Breast epithelium (tissue), 4 donors: ENCODE measurements at regions of chr17 and their contacts with region 1.

Region 1: DNA sequence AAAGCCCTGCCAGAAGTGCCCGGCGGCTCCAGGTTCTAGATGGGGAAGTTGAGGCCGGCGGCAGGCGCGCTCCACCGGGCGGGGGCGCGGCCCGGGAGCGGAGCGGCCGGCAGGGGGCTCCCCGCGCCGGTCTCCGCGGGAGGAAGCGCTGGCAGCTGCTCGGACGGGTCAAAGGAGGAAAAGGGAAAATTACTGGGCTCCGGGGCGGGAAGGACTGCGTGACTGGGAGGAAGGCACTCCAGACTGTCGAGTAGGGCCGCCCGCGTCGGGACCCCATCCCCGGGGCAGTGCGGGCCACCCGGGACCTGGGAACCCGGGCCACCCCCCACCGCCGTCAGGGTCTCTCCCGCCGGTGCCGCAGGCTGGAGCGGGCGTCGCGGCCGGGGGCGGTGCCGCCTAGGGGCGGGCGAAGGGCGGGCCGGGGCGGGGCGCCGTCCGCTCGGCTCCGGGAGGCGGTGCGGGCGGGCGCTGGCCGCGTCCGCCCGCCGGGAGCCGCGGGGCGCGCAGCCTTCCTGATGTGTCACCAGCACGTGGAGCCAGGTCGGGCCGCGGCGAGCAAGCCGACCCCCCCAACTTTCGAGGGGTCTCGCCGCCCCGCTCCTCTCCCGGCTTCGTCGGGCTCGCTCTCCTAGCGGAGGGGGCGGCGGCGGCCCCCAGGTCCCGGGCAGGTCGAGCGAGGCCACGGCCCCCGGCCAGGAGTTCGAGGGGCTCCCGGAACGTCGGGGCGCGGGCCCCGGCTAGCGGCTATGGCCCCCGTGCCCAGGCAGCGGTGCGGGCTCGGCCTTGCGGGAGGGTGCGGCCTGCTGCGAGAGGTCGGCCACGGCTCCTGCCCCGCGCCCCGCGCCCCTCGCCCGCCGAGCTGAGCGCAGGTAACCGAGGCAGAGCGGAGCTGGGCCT is 167.5 kb downstream of the RAB11FIP4 start:
- DNase-seq: peak; percentile 76 to 85
- H3K4me3 ChIP-seq: peak overlapping the region; percentile 62 to 91 (median 62)
- H3K27ac ChIP-seq: peak overlapping the region; percentile 91 to 97
- H3K4me1 ChIP-seq: peaks cover 0 to under 1% of the 10 kb centered on the region in 2 donors
- H3K27me3 ChIP-seq: no peaks in the 10 kb centered on the region
- CTCF ChIP-seq: peak in 2 of 3 donors; percentile 25 to 92
- POLR2A ChIP-seq: no peak

Region 2: GRCh38 chr17:31858642-31859473 is 299.9 kb after region 1 on chr17 and contains the start of gene COPRS:
- intact Hi-C with region 1: loop called (anchors 5 kb)
- DNase-seq: peak; percentile 70 to 85
- H3K4me3 ChIP-seq: peak within 1 kb of the TSS; percentile 49 to 97 (median 78)
- H3K27ac ChIP-seq: peak within 1 kb of the TSS; percentile 91 to 99
- H3K4me1 ChIP-seq: peaks cover 3 to 6% of the 10 kb centered on the region in 2 donors
- H3K27me3 ChIP-seq: no peaks in the 10 kb centered on the region
- CTCF ChIP-seq: no peak
- POLR2A ChIP-seq: no peak
- total RNA-seq, gene COPRS: 63.4 to 98.0 (median 70.8) TPM